ENCODE measurements at regions of chr9 and their contacts with region 1.

Region 1: GRCh38 chr9:131762356-131762932 is 22.6 kb upstream of the RAPGEF1 start:
- H3K4me3 Mint-ChIP-seq: no peak overlapping the region
- H3K27ac Mint-ChIP-seq: no peak overlapping the region
- H3K4me1 Mint-ChIP-seq: peaks cover 7% of the 10 kb centered on the region
- H3K27me3 Mint-ChIP-seq: peaks cover 51% of the 10 kb centered on the region

Region 2: DNA sequence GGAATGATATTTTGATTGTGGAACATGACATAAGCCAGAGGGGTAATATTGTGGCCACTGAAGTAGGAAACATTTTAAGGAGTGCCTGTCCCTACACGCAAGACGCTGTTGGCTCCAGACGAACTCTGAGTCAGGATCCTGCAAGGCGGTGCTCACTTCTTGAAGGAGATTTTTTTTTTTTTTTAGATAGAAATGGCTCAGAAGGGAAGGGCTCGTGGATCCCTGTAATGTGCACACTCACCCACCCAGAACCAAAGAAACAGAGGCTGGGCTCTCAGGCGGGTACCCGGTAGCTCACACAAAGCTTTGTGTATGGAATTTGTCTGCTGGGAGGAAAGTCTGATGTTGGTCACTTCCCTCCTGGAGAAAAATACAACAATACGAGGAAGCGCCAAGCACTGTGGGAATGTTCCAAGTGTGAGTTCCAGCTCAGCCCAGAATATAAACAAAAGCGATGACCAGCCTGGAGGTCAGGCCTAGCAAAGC is 48.2 kb before region 1 on chr9:
- intact Hi-C with region 1: no loop called
- H3K4me3 Mint-ChIP-seq: no peak overlapping the region
- H3K27ac Mint-ChIP-seq: peak overlapping the region; percentile 42
- H3K4me1 Mint-ChIP-seq: peaks cover 97% of the 10 kb centered on the region
- H3K27me3 Mint-ChIP-seq: no peaks in the 10 kb centered on the region

Region 3: DNA sequence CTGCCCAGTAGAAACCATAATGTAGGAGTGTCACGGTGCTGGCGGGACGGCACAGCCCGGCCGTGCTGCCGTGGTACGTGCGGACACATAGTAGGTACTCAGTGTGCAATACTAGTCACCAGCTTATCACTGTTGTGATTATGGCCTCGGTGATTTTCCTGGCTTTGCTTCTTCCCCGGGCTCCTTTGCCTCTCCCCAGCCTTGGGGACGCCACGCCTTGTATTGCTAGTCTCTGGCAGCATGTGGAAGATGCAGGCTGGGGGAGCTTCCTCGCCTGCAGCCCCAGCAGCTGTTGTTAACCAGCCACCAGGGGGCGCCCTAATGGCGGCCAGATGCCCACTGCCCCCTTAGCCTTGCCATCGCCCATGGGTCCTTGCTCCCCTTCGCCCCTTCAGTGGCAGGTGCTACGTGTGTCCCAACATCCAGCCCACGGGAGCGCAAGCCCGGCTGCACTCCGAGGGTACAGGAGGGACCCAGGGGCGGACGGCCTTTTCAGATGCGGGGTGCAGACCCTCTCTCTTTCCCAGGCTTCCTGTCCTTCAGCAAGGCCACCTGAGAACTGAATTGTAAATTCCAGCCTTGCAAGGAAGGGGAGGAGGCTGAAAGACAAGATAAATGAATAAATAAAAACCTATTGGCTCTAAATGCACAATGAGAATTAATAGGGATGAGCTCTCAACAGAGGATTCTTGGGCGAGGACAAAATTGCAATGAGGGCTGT is 407.4 kb after region 1 on chr9:
- intact Hi-C with region 1: loop called (anchors 10 kb)
- H3K4me3 Mint-ChIP-seq: no peak overlapping the region
- H3K27ac Mint-ChIP-seq: no peak overlapping the region
- H3K4me1 Mint-ChIP-seq: no peaks in the 10 kb centered on the region
- H3K27me3 Mint-ChIP-seq: peaks cover 40% of the 10 kb centered on the region

Region 4: DNA sequence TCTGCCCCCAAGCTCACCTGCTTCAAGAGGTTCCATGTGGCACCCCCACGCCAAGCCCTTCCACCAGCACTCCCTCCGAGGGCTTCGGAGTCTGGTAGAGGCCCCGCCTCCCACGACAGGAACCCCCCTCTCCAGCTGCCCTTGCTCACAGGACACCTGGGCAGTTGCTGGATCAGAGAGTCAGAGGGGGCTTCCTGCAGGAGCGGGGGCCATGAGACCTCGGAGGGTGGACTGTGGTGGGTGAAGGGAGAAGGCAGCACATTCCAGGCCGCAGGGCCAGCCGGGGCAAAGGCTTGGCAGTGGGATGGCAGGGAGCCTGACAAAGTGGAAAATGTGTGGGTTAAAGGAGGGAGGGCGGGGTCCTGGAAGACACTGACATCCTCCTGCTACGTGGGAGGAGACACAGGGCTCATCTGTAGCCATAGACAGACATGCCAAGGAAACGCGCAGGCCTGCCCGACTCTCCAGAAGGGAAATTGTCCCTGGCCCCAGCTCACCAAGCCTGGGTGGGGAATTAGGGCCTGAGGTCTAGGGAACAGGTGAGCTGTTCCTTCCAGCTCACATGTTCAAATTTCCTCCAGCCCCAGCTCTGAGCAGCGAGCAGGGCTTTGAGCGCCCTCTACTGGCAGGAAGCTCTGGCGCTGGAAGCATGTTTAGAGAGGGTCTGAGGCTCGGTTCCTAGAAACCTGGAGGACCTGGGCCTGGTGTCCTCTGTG is 473.7 kb after region 1 on chr9:
- intact Hi-C with region 1: loop called (anchors 5 kb)
- H3K4me3 Mint-ChIP-seq: no peak overlapping the region
- H3K27ac Mint-ChIP-seq: no peak overlapping the region
- H3K4me1 Mint-ChIP-seq: peaks cover 36% of the 10 kb centered on the region
- H3K27me3 Mint-ChIP-seq: peaks cover 44% of the 10 kb centered on the region

Region 5: GRCh38 chr9:132249123-132249522 is 486.7 kb after region 1 on chr9:
- intact Hi-C with region 1: loop called (anchors 1 kb)
- H3K4me3 Mint-ChIP-seq: no peak overlapping the region
- H3K27ac Mint-ChIP-seq: no peak overlapping the region
- H3K4me1 Mint-ChIP-seq: no peaks in the 10 kb centered on the region
- H3K27me3 Mint-ChIP-seq: peaks cover 48% of the 10 kb centered on the region